Ovary (tissue), 10 donors: ENCODE measurements at regions of chr18 and their contacts with region 1.

Region 1: DNA sequence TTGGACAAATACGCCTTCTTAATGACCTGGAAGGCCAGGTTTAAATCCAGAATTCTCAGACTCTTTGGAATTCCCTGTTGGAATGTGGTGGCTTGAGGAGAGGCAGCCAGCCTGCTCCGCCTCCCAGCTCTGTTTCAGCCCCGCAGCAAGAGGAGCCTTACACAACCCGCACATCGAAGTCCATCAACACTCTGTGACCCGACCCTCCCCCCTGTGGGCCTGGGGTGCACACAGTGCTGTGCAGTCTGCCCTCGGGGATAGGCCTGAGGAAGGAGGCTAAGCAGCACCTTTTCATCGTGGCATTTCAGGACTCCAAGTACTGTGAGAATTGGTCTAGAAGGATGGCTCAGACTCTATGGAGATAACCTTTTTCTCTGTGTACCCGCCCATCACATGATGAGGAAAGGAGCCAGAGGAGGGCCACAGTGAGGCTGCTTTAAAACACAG is 73.7 kb downstream of the GREB1L start:
- DNase-seq: no peak
- H3K4me3 ChIP-seq: no peak overlapping the region
- H3K27ac ChIP-seq: no peak overlapping the region
- H3K4me1 ChIP-seq: peaks cover 5% of the 10 kb centered on the region
- H3K27me3 ChIP-seq: no peaks in the 10 kb centered on the region
- CTCF ChIP-seq: no peak
- EP300 ChIP-seq: no peak
- POLR2A ChIP-seq: no peak

Region 2: GRCh38 chr18:21254576-21254975 is 61.2 kb before region 1 on chr18:
- intact Hi-C with region 1: no loop called
- DNase-seq: no peak
- H3K4me3 ChIP-seq: no peak overlapping the region
- H3K27ac ChIP-seq: no peak overlapping the region
- H3K4me1 ChIP-seq: no peaks in the 10 kb centered on the region
- H3K27me3 ChIP-seq: no peaks in the 10 kb centered on the region
- CTCF ChIP-seq: no peak
- EP300 ChIP-seq: no peak
- POLR2A ChIP-seq: no peak

Region 3: GRCh38 chr18:21264651-21265050 is 51.1 kb before region 1 on chr18:
- intact Hi-C with region 1: loop called in 1 of 4 experiments (anchors 10 kb)
- DNase-seq: peak in 4 of 5 donors; percentile 25 to 33 (median 32)
- H3K4me3 ChIP-seq: no peak overlapping the region
- H3K27ac ChIP-seq: peak overlapping the region in 1 of 2 donors; percentile 28
- H3K4me1 ChIP-seq: no peaks in the 10 kb centered on the region
- H3K27me3 ChIP-seq: no peaks in the 10 kb centered on the region
- CTCF ChIP-seq: no peak
- EP300 ChIP-seq: no peak
- POLR2A ChIP-seq: no peak

Region 4: GRCh38 chr18:21345840-21346239 is 30.1 kb after region 1 on chr18:
- intact Hi-C with region 1: no loop called
- DNase-seq: no peak
- H3K4me3 ChIP-seq: no peak overlapping the region
- H3K27ac ChIP-seq: no peak overlapping the region
- H3K4me1 ChIP-seq: no peaks in the 10 kb centered on the region
- H3K27me3 ChIP-seq: no peaks in the 10 kb centered on the region
- CTCF ChIP-seq: no peak
- EP300 ChIP-seq: no peak
- POLR2A ChIP-seq: no peak